ENCODE measurements at regions of chr2 and their contacts with region 1.

Region 1: DNA sequence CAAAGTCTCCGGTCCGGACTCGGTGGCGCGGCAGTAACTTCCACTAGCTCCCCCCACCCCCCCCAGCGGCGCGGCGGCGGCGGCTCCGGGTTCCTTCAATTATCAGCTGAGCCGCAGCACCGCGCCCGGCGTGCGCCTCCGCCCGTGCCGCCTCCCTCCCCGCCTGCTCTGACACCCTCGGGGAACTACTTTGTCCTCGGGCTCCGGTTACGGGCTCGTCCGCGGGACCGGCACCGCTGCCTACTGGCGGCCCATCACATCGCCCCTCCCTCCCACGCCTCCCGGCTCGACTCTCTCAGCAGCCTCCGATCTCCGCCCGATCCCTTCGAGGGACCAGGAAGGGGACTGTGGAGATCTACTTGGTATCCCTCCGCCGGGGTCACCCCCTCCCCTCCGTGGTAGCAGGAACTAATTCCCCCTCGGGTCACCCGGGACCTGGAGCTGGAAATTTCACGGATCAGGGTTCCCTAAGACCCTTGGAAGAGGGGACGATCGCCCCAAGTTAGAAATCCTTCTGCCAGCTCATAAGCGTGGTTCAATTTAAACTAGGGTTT is at the start of gene TRIP12:
- DNase-seq: peak; percentile 95 to 97
- H3K4me3 ChIP-seq: peak within 1 kb of the TSS; percentile 89 to 97
- H3K27ac ChIP-seq: peak within 1 kb of the TSS; percentile 97 to 99
- H3K4me1 ChIP-seq: peaks cover 0 to 31% (median 9%) of the 10 kb centered on the region in 4 donors
- H3K27me3 ChIP-seq: no peaks in the 10 kb centered on the region
- CTCF ChIP-seq: no peak

Region 2: DNA sequence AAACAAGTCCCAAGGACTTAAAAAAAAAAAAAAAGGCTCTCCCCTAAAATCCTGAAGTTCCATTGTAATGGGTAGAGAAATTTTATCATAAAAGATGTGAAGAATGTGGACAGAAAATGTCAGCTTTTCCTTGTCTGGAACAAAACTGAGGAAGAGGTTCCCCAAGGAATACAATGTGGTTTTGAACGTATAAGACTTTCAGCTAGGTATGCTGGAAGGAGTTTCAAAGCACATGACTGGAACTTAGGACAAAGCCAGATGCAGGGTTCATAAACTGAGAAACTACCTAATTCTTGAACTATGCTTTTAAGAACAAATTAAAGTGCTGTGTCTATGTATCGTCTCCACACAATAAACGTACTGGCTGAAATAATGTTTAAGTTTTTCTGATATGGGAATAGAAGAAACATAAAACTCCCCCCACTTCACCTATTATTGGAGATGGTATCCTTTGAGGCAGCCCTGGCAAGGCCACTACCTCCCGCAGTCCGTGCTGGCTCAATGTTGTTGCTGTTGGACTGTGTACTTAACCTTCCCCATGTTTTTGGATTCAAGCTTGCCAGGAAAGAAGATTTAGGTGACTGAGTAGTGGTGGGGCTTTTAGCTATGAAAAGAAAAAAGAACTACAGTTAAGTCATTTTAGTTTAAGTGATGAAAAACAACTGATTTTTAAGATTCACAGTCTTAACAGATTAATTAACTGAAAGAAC is 123.4 kb before region 1 on chr2:
- intact Hi-C with region 1: loop called (anchors 10 kb)
- DNase-seq: no peak
- H3K4me3 ChIP-seq: no peak overlapping the region
- H3K27ac ChIP-seq: peak overlapping the region; percentile 4 to 13
- H3K4me1 ChIP-seq: peaks cover 0 to 37% (median 18%) of the 10 kb centered on the region in 4 donors
- H3K27me3 ChIP-seq: no peaks in the 10 kb centered on the region
- CTCF ChIP-seq: no peak

Region 3: DNA sequence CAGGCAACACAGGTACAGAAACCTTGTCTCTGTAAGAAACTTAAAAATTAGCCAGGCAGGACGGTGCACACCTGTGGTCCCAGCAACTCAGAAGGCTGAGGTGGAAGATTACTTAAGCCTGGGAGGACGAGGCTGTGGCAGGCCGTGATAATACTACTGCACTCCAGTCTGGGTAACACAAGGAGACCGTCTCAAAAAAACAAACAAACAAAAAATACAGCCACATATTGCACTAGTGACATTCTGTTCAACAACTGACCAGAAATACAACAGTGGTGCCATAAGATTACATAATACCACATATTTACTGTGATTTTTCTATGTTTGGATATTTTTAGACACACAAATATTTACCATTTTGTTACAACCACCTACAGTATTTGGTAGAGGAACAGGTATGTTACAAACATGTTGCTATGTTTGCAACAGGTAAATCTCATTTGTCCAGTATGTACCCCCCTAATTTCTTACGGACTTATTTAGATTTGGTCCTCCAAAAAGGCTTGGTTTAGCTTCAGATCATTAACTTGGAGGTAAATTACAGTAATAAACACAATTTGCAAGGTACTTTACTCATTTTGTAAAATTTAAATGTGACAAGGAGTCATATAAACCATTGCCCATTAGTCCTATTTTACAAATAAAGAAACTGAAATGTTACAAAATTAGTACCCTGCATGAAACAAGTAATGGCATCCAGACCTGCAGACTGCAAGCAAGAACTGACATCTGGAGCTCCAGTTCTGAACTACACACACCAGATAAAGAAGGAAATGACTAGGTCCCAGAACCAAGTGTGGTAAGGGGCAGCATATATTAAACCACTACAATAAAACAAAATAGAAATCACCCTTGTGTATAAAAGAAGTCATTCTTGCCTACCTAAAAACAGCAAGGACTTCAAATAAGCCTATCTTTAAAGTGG is 36.9 kb before region 1 on chr2:
- intact Hi-C with region 1: no loop called
- DNase-seq: no peak
- H3K4me3 ChIP-seq: no peak overlapping the region
- H3K27ac ChIP-seq: no peak overlapping the region
- H3K4me1 ChIP-seq: peaks cover 0 to 51% (median 9%) of the 10 kb centered on the region in 4 donors
- H3K27me3 ChIP-seq: no peaks in the 10 kb centered on the region
- CTCF ChIP-seq: no peak